ENCODE measurements at regions of chr15 and their contacts with region 1.

Region 1: DNA sequence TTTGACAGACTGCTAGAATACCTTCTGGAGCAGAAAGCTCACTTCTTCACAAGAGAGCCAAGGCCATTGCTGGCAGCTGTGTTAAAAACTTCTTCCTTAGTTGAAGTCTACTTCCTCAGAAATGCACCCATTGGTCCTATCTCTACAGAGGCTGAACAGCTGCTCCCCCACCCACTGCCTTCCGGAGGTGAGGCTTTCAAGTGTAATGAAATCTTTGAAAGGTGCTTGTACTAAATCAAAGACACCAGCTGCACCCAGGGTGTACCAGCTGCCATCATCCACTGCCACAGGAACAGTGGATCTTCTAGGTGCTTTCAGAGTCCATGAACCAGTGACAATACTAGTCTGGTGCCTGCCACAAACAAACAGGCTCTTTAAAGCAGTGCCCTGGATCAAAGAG is 26.4 kb upstream of the HERC1 start:
- DNase-seq: no peak
- ATAC-seq: no peak
- H3K4me3 ChIP-seq: no peak overlapping the region
- H3K27ac ChIP-seq: no peak overlapping the region
- H3K4me1 ChIP-seq: no peaks in the 10 kb centered on the region
- H3K27me3 ChIP-seq: no peaks in the 10 kb centered on the region
- CTCF ChIP-seq: no peak

Region 2: DNA sequence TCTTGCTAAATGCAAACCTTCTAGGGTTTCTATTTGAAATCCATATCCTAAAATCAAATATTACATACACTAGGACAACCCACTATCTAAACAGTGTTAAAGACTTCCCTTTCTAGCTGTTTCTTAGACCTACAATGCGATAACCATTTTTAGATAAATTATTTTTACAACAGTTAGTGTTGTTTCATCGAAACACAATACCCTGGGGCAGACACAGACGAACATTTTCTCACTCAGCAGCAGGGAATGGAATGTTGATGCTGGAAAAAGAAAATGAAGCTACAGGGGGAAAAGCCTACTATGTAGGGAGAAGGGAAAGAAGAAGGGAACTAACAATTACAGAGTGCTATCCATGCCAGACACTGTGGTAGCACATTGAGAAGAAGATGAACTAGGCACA is 20.4 kb before region 1 on chr15:
- CTCF ChIA-PET with region 1: interaction called, 10 read pairs
- POLR2A ChIA-PET with region 1: no interaction called
- in situ Hi-C with region 1: no loop called
- intact Hi-C with region 1: no loop called
- DNase-seq: no peak
- ATAC-seq: no peak
- H3K4me3 ChIP-seq: no peak overlapping the region
- H3K27ac ChIP-seq: no peak overlapping the region
- H3K4me1 ChIP-seq: no peaks in the 10 kb centered on the region
- H3K27me3 ChIP-seq: no peaks in the 10 kb centered on the region
- CTCF ChIP-seq: no peak

Measured in Panc1 (cell line).